IMR-90 (cell line): ENCODE measurements at regions of chr11 and their contacts with region 1.

Region 1: GRCh38 chr11:62025487-62026105 is 58.2 kb upstream of the FTH1 start:
- DNase-seq: peak; percentile 91
- ATAC-seq: peak; percentile 94
- H3K4me3 ChIP-seq: no peak overlapping the region
- H3K27ac ChIP-seq: peak overlapping the region; percentile 62
- H3K4me1 ChIP-seq: peaks cover 6% of the 10 kb centered on the region; the same call in 1 of the 2 replicates
- H3K27me3 ChIP-seq: peaks cover 2% of the 10 kb centered on the region; the same call in 1 of the 2 replicates
- CTCF ChIP-seq: no peak
- POLR2A ChIP-seq: no peak
- RAD21 ChIP-seq: no peak

Region 2: DNA sequence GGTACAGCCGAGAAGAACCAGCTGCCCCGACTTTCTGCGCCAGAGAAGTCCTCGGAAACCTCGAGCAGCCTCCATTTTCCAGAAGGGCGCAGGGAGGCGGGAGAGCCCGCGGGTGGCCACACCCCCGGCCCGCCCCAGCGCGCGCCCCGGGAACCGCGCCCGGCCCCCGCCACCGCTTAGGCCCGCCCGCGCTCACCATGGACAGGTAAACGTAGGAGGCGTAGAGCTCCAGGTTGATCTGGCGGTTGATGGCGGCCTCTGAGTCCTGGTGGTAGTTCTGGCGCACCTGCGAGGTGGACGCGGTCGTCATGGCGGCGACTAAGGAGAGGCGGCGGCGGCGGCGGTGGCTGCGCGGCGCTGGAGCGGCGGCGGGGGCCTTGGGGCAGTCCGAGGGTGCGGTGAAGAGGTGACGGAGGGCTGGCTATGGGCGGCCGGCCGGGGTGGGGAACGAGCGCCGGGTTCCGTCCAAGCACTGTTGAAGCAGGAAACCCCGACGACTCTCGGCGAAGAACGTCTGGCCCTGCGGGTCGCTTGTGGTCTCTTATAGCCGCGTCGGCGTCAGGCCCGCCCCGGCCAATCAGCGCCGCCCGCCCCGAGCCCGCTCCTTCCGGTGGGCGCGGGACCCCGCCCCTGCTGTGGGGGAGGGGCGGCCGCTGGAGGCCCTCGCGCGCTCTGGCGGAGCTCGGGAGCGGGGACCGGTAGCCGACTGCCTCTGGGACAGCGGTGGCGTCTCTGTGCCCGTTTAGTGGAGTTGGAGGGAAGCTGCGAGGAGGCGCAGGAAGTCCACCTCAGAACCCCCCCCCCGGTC is 58.3 kb before region 1 on chr11 and contains the start of gene FTH1:
- CTCF ChIA-PET with region 1: no interaction called
- POLR2A ChIA-PET with region 1: no interaction called
- dilution Hi-C with region 1: no loop called
- in situ Hi-C with region 1: loop called (anchors 10 kb)
- intact Hi-C with region 1: loop called (anchors 1 kb)
- DNase-seq: peak; percentile 88
- ATAC-seq: peak; percentile 70
- H3K4me3 ChIP-seq: peak within 1 kb of the TSS; percentile 93
- H3K27ac ChIP-seq: peak within 1 kb of the TSS; percentile 96
- H3K4me1 ChIP-seq: peaks cover 19% of the 10 kb centered on the region
- H3K27me3 ChIP-seq: no peaks in the 10 kb centered on the region
- CTCF ChIP-seq: no peak
- POLR2A ChIP-seq: peak; percentile 98
- RAD21 ChIP-seq: no peak
- total RNA-seq, gene FTH1: 344 and 385 TPM in 2 replicates